Cardiac septum (tissue), 1 donor: ENCODE measurements at regions of chr11 and their contacts with region 1.

Region 1: DNA sequence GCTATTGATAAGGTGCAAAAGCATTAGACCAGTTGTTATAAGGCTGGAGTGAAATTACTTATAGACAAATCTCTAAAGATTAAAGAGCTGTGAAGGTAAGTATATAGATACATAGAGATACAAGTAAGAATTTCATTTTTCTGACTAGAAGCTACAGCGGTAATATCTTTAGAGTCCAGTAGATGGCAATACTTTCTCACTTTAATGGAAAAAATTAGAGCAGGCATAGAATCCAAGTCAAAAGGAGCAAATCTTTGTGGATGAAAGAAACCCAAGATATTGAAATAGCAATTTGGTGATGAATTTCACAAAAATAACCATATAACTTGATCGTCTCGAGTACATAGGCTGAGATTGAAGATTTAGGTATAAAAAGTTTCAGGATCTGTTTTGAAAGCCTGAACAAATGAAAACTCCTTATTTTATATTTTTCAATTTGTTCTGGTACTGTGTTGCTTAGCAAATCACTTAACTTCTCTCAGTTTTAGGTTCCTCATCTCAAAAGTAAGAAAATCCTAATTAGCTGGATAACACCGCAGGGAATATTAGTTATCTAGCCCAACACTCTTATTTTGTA is 81.9 kb downstream of the UVRAG start:
- DNase-seq: no peak

Region 2: GRCh38 chr11:76152086-76152681 is 255.3 kb after region 1 on chr11:
- intact Hi-C with region 1: loop called (anchors 1 kb)
- DNase-seq: peak; percentile 92

Region 3: GRCh38 chr11:76318744-76319384 is 421.9 kb after region 1 on chr11:
- intact Hi-C with region 1: loop called (anchors 2 kb)
- DNase-seq: peak; percentile 90